Breast epithelium (tissue), 4 donors: ENCODE measurements at regions of chr14 and their contacts with region 1.

Region 1: DNA sequence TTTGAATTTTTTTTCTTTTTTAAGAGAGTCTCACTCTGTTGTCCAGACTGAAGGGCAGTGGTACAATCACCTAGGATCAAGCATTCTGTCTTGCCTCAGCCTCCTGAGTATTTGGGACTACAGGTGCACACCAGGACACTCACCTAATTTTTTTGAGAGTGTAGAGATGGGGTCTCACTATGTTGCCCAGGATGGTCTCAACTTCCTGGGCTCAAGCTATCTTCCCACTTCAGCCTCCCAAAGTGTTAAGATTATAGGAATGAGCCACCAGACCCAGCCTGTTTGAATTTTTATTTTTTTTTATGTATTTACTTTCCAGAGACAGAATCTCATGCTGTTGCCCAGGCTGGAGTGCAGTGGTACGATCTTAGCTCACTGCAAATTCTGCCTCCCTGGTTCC is 11.3 kb downstream of the BAZ1A start:
- DNase-seq: no peak
- H3K4me3 ChIP-seq: no peak overlapping the region
- H3K27ac ChIP-seq: no peak overlapping the region
- H3K4me1 ChIP-seq: no peaks in the 10 kb centered on the region
- H3K27me3 ChIP-seq: no peaks in the 10 kb centered on the region
- CTCF ChIP-seq: no peak
- POLR2A ChIP-seq: no peak

Region 2: GRCh38 chr14:34693228-34693939 is 170.5 kb before region 1 on chr14:
- intact Hi-C with region 1: no loop called
- DNase-seq: no peak
- H3K4me3 ChIP-seq: peak overlapping the region; percentile 16 to 60 (median 41)
- H3K27ac ChIP-seq: no peak overlapping the region
- H3K4me1 ChIP-seq: no peaks in the 10 kb centered on the region
- H3K27me3 ChIP-seq: no peaks in the 10 kb centered on the region
- CTCF ChIP-seq: no peak
- POLR2A ChIP-seq: no peak

Region 3: GRCh38 chr14:34810028-34810427 is 53.8 kb before region 1 on chr14:
- intact Hi-C with region 1: loop called (anchors 2 kb)
- DNase-seq: no peak
- H3K4me3 ChIP-seq: no peak overlapping the region
- H3K27ac ChIP-seq: no peak overlapping the region
- H3K4me1 ChIP-seq: no peaks in the 10 kb centered on the region
- H3K27me3 ChIP-seq: no peaks in the 10 kb centered on the region
- CTCF ChIP-seq: no peak
- POLR2A ChIP-seq: no peak

Region 4: GRCh38 chr14:35004839-35005238 is 141.0 kb after region 1 on chr14:
- intact Hi-C with region 1: no loop called
- DNase-seq: no peak
- H3K4me3 ChIP-seq: no peak overlapping the region
- H3K27ac ChIP-seq: no peak overlapping the region
- H3K4me1 ChIP-seq: no peaks in the 10 kb centered on the region
- H3K27me3 ChIP-seq: no peaks in the 10 kb centered on the region
- CTCF ChIP-seq: no peak
- POLR2A ChIP-seq: no peak

Region 5: GRCh38 chr14:35174342-35174741 is 310.5 kb after region 1 on chr14:
- intact Hi-C with region 1: no loop called
- DNase-seq: no peak
- H3K4me3 ChIP-seq: no peak overlapping the region
- H3K27ac ChIP-seq: no peak overlapping the region
- H3K4me1 ChIP-seq: no peaks in the 10 kb centered on the region
- H3K27me3 ChIP-seq: no peaks in the 10 kb centered on the region
- CTCF ChIP-seq: no peak
- POLR2A ChIP-seq: no peak